GM10248 (cell line): ENCODE measurements at regions of chr7 and their contacts with region 1.

Region 1: DNA sequence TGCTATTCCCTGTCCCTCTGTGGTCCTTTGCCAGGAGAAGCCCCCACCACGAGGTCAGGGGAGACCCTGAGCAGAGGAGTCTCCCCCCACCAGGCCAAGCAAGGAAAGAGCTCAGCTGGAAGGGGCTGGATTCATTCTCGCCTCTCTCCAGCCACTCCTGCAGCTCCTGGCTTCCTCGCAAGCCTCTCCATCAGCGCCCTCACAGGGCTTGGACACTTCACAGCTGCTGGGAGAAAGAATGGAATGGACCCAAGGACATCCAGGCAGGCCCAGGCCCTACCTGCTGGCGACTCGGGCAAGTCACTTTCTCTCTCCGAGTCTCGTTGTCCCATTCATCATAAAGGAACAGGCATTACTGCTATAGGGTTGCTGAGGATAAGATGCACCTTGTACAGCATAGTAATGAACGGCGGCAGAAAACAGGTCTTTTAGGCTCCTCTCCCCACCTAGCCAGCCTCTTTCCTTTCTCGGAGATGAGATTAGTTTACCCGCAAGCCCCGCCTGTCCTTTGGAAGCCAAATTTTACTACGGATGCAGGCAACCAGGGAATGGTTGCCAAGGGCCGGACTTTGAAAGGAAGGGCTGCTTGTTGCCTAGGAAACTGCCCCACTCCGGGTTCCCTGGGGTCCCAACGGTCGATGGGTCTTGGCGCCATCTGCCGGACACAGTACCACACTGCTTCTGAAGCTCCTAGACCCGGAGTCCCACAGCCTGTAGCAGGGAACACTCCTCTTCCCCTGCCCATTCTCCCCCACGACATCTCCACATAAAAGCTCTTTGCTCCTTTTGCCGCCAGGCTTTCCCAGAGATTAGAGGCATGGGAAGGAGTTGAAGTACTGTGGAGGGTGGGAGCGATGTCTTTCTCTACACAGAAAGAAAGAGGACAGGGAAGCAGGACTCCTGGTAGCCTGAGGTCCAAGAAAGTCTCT is 22.3 kb downstream of the IMPDH1 start:
- DNase-seq: peak; percentile 89
- CTCF ChIP-seq: peak; percentile 89

Region 2: DNA sequence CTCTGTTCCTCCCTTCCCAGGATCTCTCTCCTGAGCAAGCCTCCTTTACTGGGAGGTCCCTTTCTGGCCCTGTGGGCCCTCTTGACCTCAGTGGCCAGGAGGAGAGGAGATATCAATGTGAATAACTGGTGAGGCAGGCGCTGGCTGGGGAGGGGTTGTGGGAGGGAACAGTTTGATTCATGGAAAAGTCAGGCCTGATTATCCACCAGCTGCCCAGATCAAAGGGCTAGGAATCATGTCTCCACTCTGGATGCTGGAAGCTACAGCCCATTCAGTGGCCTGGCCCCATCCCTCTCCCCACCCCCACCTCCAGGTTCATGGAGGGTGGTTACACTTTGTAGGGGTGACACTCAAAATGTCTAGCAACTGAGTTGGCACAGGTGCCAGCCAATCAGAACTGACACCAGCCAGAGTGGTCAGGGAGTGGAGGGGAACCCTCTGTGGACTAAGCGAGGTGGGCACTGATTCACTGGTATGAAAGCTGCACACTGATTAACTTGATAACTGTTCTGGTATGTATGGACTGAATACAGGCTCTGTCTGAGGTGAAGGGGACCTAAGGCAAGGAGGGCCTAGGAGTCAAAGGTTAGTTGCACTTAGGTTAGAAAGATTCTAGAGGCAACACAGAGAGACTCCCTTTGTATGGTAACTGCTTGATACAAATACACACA is 30.8 kb before region 1 on chr7:
- CTCF ChIA-PET with region 1: interaction called, 168 read pairs
- POLR2A ChIA-PET with region 1: no interaction called
- DNase-seq: no peak
- CTCF ChIP-seq: no peak

Region 3: GRCh38 chr7:128373606-128374005 is 13.9 kb before region 1 on chr7:
- CTCF ChIA-PET with region 1: interaction called, 76 read pairs
- POLR2A ChIA-PET with region 1: no interaction called
- DNase-seq: no peak
- CTCF ChIP-seq: no peak

Region 4: DNA sequence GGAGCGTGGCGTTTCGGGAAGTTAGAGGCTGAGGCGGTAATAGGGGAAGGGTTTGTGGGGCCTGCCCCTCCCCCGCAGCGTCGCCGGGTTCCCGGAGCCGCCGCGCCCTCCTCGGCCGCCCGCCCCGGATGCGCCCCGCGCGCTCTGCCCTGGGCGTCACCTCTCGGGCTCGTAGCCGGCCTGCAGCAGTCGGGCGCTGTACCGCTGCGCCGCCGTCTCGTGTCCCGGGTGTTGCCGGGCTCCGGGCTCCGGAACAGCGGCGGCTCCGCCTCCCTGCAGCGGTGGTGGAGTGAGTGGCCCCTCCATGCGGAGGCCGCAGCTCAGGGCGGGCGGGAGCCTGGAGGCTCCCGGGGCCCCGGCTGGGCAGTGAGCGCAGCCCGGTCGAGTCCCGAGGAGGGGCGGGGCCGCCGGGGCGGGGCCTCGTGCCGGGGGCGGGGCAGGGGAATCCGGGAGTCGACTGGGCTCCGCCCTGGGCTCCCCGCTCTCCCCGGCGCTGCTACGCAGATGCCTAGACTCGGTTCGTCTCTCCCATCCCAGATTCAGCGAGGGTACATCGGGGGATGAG is 22.2 kb after region 1 on chr7 and contains the start of gene IMPDH1:
- CTCF ChIA-PET with region 1: interaction called, 963 read pairs
- POLR2A ChIA-PET with region 1: no interaction called
- DNase-seq: peak; percentile 96
- CTCF ChIP-seq: no peak

Region 5: GRCh38 chr7:128763541-128763940 is 376.1 kb after region 1 on chr7:
- CTCF ChIA-PET with region 1: no interaction called
- POLR2A ChIA-PET with region 1: no interaction called
- DNase-seq: no peak
- CTCF ChIP-seq: no peak